ENCODE measurements at regions of chr17 and their contacts with region 1.

Region 1: DNA sequence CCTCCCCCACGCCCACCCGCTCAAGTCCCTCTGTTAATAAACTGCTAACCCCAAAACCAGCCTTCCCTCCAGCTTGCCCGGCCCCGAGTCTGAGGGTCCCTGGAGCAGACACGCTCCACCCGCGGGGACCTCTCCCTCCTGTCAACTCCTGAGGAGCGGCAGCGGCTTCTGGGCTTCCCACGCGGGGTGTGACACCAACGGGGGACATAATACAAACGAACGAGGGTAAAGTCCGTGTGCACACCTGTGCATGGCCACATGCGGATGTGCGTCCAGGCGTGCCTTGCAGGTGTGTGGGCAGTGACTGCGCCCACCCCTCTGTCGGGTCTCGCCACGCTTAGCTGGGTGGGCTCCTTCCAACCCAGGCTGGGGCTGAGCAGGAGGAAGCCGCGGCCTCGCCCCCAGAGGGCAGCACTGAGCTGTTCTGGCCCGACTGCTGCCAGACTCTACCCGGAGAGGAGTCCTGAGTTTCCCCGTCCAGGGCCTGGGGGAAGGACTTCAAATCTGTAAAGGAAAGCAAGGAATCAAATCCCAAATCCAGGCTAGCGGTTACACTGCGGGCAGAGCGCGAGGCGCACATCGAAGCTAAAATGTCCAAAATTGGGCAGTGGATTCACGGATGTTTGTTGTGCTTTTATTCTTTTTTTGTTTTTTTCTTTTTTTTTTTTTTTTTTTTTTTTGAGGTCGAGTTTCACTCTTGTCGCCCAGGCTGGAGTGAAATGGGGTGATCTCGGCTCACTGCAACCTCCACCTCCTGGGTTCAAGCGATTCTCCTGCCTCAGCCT is 24.2 kb upstream of the KRT17 start:
- DNase-seq: peak; percentile 41 to 91 (median 79)
- ATAC-seq: peak; percentile 87 to 92 (median 88)
- H3K4me3 ChIP-seq: peak overlapping the region; percentile 55 to 76
- H3K4me3 Mint-ChIP-seq: peak overlapping the region in 2 of 3 donors; percentile 74 to 75
- H3K27ac ChIP-seq: no peak overlapping the region
- H3K27ac Mint-ChIP-seq: peak overlapping the region in 1 of 2 donors; percentile 49
- H3K4me1 ChIP-seq: peaks cover 2 to 16% of the 10 kb centered on the region in 2 experiments
- H3K4me1 Mint-ChIP-seq: peaks cover 9 to 10% (median 9%) of the 10 kb centered on the region in 3 donors
- H3K27me3 ChIP-seq: peaks cover 0 to 16% of the 10 kb centered on the region in 2 experiments
- H3K27me3 Mint-ChIP-seq: no peaks in the 10 kb centered on the region

Region 2: GRCh38 chr17:40857535-40857934 is 791.1 kb before region 1 on chr17:
- CTCF ChIA-PET with region 1: interaction called, 7 to 15 read pairs
- POLR2A ChIA-PET with region 1: no interaction called
- DNase-seq: no peak
- ATAC-seq: no peak
- H3K4me3 ChIP-seq: no peak overlapping the region
- H3K4me3 Mint-ChIP-seq: no peak overlapping the region
- H3K27ac ChIP-seq: no peak overlapping the region
- H3K27ac Mint-ChIP-seq: no peak overlapping the region
- H3K4me1 ChIP-seq: no peaks in the 10 kb centered on the region
- H3K4me1 Mint-ChIP-seq: peaks cover 0 to 7% (median 3%) of the 10 kb centered on the region in 3 donors
- H3K27me3 ChIP-seq: peaks cover 0 to 7% of the 10 kb centered on the region in 2 experiments
- H3K27me3 Mint-ChIP-seq: peaks cover 14 to 21% of the 10 kb centered on the region in 2 donors

Region 3: DNA sequence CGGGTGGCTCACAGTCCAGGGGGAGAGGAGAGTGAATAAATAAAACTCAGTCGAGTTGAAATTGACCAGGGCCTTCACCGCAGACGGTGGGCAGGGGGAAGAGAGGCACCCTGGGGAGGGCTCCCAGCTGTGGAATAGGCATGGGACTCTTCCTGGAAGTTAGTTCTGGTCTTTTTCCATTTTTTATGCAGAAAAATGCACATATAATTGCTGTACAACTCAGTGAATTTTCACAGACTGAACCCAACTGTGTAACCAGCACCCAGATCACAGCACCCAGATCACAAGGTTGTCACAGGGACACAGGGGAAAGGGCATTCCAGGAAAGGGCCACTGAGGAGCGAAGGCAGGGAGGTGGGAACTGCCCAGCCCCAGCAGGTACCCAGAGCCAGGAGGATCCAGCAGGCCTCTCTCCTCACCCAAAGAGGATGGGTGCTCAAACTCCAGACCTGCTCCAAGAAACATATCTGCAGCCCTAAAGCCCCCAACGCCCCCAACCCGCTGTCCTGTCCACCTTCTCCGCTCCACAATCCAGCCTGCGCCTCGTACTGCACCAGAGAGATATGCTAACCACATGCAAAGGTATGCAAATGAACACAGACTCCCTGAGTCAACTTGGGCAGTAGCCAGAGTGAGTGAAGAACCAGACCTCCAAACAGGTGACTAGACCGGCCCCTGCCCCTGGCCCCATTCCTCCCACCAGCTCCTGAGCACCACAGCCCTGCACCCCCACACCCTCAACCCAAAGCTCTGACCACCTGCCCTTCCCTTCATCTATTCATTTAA is 11.0 kb after region 1 on chr17:
- CTCF ChIA-PET with region 1: interaction called, 22 to 103 read pairs
- POLR2A ChIA-PET with region 1: no interaction called
- DNase-seq: no peak
- ATAC-seq: no peak
- H3K4me3 ChIP-seq: no peak overlapping the region
- H3K4me3 Mint-ChIP-seq: no peak overlapping the region
- H3K27ac ChIP-seq: no peak overlapping the region
- H3K27ac Mint-ChIP-seq: no peak overlapping the region
- H3K4me1 ChIP-seq: peaks cover 0 to 7% of the 10 kb centered on the region in 2 experiments
- H3K4me1 Mint-ChIP-seq: peaks cover 2 to 4% (median 2%) of the 10 kb centered on the region in 3 donors
- H3K27me3 ChIP-seq: peaks cover 0 to 36% of the 10 kb centered on the region in 2 experiments
- H3K27me3 Mint-ChIP-seq: peaks cover 0 to 2% of the 10 kb centered on the region in 2 donors

Measured in T-cell (primary cell).